ENCODE measurements at regions of chr1 and their contacts with region 1.

Region 1: DNA sequence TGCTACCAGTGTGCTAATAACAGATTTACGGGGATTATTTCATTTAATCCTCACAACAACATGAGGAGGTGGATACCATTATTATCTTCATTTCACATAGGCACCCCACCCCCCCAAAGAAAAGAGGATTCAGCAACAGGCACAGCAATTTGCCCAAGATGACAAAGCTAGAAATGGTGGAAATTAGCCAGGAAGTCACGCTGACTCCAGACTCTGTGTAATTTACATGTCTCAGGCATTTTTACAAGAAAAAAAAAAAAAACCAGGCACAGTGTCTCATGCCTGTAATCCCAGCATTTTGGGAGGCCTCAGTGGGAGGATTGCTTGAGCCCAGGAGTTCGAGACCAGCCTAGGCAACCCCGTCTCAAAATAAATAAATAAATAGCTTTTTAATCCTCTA is 37.5 kb upstream of the PRDM2 start:
- DNase-seq: no peak
- H3K4me3 Mint-ChIP-seq: no peak overlapping the region
- H3K27ac Mint-ChIP-seq: no peak overlapping the region
- H3K4me1 Mint-ChIP-seq: no peaks in the 10 kb centered on the region
- H3K27me3 Mint-ChIP-seq: peaks cover 6% of the 10 kb centered on the region

Region 2: GRCh38 chr1:13725714-13726175 is 63.3 kb after region 1 on chr1:
- intact Hi-C with region 1: loop called (anchors 1 kb)
- DNase-seq: peak; percentile 27
- H3K4me3 Mint-ChIP-seq: no peak overlapping the region
- H3K27ac Mint-ChIP-seq: no peak overlapping the region
- H3K4me1 Mint-ChIP-seq: peaks cover 27% of the 10 kb centered on the region
- H3K27me3 Mint-ChIP-seq: no peaks in the 10 kb centered on the region

Region 3: GRCh38 chr1:13730751-13731482 is 68.4 kb after region 1 on chr1:
- intact Hi-C with region 1: loop called (anchors 1 kb)
- DNase-seq: peak; percentile 82
- H3K4me3 Mint-ChIP-seq: peak overlapping the region; percentile 79
- H3K27ac Mint-ChIP-seq: peak overlapping the region; percentile 99
- H3K4me1 Mint-ChIP-seq: peaks cover 52% of the 10 kb centered on the region
- H3K27me3 Mint-ChIP-seq: no peaks in the 10 kb centered on the region

Region 4: GRCh38 chr1:13813398-13814012 is 151.0 kb after region 1 on chr1:
- intact Hi-C with region 1: loop called (anchors 1 kb)
- DNase-seq: peak; percentile 32
- H3K4me3 Mint-ChIP-seq: no peak overlapping the region
- H3K27ac Mint-ChIP-seq: no peak overlapping the region
- H3K4me1 Mint-ChIP-seq: peaks cover 6% of the 10 kb centered on the region
- H3K27me3 Mint-ChIP-seq: no peaks in the 10 kb centered on the region

Region 5: DNA sequence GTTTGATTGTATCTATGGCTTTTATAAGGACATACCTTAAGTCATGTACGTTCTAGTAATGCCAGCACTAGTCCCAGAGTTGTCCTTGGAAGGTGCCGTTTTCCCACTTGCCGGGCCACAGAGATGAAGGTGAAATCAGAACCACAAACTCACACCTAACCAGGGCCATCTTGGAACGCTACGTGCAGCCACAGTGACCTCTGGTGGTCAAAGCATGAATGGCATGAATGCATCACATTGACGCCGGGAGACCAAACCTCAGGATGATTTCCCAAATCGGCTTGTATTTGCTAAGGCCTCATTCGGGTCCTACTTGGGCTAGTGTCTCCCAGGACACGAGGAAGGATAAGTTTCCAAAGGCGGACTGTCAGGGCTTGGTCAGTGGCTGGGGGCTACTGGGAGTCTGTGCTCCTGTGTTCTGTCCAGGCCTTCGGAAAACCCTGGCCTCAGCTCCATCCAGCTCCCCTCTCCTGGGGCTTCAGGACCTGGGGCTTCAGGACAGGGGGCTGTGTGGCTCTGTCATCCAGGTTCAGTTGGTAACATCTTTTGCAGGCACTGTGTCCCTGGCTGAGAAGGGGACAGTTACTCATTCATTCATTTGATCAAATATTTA is 298.0 kb after region 1 on chr1:
- intact Hi-C with region 1: loop called (anchors 1 kb)
- DNase-seq: peak; percentile 16
- H3K4me3 Mint-ChIP-seq: no peak overlapping the region
- H3K27ac Mint-ChIP-seq: no peak overlapping the region
- H3K4me1 Mint-ChIP-seq: no peaks in the 10 kb centered on the region
- H3K27me3 Mint-ChIP-seq: no peaks in the 10 kb centered on the region

Measured in activated T-helper 2 cell treated with anti-CD3 and anti-CD28 coated beads, Interferon-gamma antibody, Interleukin-2, Interleukin-4, amounts not matched to agents 10 μg/mL and 5 μg/mL and 100 μg/mL, durations not matched to agents 14 hours and 24 hours and 36 hours (primary cell).